Activated naive CD4-positive, alpha-beta T cell treated with anti-CD3 and anti-CD28 coated beads for 36 hours (primary cell): ENCODE measurements at regions of chr14 and their contacts with region 1.

Region 1: DNA sequence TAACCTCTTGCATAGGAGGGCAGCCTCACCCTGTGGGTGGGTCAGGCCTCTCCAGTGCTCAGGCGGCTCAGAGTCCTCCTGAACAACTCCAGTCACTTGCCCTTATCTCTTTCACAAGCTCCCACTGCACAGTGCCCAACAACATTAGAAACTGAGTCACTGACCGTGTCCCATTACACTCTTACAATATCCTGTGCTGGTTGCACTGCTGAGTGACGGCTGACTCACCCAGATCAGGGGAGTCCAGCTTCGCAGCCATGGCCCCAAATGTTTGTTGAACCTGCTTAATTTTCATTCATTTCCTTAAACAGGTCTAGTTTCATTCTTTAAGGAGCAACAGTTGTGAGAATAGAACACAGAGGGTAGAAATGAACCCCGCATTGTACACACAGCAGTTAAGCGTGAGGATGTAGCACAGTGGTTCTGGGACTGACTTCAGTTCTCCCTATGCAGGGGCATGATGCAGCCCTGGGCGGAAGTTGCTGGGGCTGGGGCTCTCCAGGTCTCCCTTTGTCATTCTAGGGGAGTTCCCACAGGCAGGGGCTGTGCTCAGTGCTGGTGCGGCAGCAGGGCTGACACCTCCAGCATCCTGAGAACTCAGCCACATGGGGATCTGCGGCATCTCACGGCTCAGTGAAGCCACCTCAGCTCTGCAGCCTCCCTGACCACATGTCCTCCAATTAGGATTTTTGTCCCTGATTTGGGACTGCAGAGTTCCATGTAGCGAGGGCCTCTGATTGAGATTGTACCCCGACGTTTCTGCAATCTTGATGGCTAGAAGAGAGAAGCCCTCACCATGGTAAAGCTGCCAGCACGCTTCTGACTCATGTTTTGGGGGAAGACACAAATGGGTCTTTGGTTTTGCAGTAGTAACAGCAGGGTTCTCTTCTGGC is 16.1 kb downstream of the GPR68 start:
- DNase-seq: peak; percentile 97
- H3K4me3 Mint-ChIP-seq: peak overlapping the region; percentile 58
- H3K27ac Mint-ChIP-seq: peak overlapping the region; percentile 99
- H3K4me1 Mint-ChIP-seq: peaks cover 89% of the 10 kb centered on the region
- H3K27me3 Mint-ChIP-seq: no peaks in the 10 kb centered on the region

Region 2: DNA sequence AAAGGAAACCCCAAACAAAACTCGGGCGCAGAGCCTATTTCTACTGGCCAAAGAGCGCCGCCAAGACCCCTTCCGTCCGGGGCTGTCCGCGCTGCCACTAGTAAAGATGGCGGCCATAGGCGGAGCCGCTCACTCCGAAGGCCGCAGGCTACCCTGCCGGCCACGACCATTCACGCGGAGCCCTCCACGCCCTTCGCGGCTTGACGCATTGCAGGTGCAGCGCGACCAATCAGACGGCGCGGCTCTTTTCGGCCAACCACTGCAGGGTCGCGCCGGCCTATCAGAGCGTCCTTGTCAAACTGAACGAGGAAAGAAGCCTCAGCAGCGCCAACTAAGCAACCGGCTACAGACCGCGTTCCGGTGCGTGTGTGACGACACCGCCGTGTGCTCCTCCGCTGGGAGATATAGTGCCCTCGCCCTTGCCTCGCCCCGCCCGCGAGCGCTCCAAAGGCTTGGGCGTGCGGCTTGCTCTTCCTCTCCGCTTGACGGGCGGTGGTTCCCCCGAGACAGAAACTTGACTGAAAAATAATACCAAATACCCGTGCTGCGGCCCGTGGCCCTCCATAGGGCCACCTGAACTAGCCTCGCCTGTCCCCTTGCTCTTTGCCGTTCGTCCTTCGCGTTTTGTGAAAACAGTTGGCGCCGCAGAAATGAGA is 845.2 kb before region 1 on chr14:
- CTCF ChIA-PET with region 1: no interaction called
- intact Hi-C with region 1: loop called (anchors 1 kb)
- DNase-seq: peak; percentile 99
- H3K4me3 Mint-ChIP-seq: no peak overlapping the region
- H3K27ac Mint-ChIP-seq: no peak overlapping the region
- H3K4me1 Mint-ChIP-seq: peaks cover 23% of the 10 kb centered on the region
- H3K27me3 Mint-ChIP-seq: no peaks in the 10 kb centered on the region

Region 3: DNA sequence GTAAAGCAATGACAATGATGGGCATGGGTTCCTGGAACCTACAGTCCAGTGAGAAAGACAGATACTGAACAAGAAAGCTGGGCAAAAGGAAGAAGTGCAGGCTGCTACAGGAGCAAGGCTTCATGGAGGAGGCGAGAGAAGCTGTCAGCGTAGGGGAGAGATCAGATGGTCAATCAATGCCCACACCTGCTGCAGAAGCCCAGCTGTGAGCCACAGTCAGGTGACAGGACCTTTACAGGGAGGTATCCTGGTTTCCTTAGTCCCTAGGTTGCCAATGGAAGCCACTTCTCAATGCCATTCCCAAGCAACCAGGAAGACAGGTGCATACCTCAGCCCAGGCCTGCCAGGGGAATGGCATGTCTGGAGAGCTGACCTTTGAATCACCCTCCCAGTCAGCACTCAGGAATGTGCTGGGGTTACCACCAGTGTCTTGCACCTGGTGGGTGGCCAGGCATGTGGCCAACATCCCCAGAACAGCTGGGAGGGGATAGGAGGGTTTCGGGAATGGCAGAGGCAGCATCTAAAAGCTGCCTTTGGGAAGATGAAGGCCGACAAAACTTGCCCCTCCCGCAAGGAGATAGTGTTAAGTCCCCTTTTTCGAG is 582.4 kb before region 1 on chr14:
- CTCF ChIA-PET with region 1: no interaction called
- intact Hi-C with region 1: no loop called
- DNase-seq: no peak
- H3K4me3 Mint-ChIP-seq: no peak overlapping the region
- H3K27ac Mint-ChIP-seq: no peak overlapping the region
- H3K4me1 Mint-ChIP-seq: no peaks in the 10 kb centered on the region
- H3K27me3 Mint-ChIP-seq: no peaks in the 10 kb centered on the region

Region 4: DNA sequence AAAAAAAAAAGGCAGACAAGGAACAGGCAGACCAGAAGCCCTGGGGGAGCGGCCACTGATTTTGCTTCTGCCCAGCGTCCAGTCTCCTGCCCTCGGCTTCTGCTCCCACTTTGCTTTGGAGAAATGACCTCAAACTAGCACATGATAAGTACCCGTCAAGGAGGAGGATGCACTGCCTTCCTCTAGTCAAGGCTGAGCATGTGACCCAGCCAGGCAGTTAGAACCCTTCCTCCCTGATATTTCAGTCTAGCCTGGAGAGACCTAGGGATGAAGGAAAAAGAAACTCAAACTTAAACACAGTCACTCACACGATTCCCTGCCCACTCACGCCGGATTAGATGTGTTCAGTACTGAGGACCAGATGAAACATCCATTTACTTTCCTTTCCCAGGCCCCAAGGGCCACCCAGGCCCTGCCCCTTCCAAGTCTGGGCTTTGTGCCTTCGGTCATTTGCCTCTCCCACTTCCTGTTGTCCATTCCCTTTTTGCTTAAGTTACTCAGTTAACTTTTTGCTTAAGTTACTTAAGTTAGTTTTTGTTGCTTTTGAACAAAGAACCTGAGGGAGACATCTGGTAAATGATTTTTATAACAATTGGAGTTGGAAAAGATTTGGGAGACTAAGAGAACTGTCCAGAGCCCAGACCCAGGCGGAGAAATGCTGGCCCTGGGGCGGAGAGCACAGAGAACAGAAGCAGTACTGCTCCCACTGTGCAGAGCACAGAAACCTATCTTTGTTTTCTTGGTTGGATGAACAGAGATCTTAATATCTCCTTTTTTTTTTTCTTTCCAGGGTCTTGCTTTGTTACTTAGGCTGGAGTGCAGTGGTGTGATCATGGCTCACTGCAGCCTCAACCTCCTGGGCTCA is 389.1 kb before region 1 on chr14:
- CTCF ChIA-PET with region 1: no interaction called
- intact Hi-C with region 1: no loop called
- DNase-seq: no peak
- H3K4me3 Mint-ChIP-seq: no peak overlapping the region
- H3K27ac Mint-ChIP-seq: no peak overlapping the region
- H3K4me1 Mint-ChIP-seq: peaks cover 14% of the 10 kb centered on the region
- H3K27me3 Mint-ChIP-seq: no peaks in the 10 kb centered on the region

Region 5: GRCh38 chr14:91089958-91090535 is 138.3 kb before region 1 on chr14:
- CTCF ChIA-PET with region 1: no interaction called
- intact Hi-C with region 1: no loop called
- DNase-seq: no peak
- H3K4me3 Mint-ChIP-seq: no peak overlapping the region
- H3K27ac Mint-ChIP-seq: no peak overlapping the region
- H3K4me1 Mint-ChIP-seq: peaks cover 11% of the 10 kb centered on the region
- H3K27me3 Mint-ChIP-seq: no peaks in the 10 kb centered on the region

Region 6: GRCh38 chr14:91114079-91115065 is 114.0 kb before region 1 on chr14:
- CTCF ChIA-PET with region 1: no interaction called
- intact Hi-C with region 1: loop called (anchors 2 kb)
- DNase-seq: peak; percentile 82
- H3K4me3 Mint-ChIP-seq: peak overlapping the region; percentile 94
- H3K27ac Mint-ChIP-seq: peak overlapping the region; percentile 95
- H3K4me1 Mint-ChIP-seq: peaks cover 60% of the 10 kb centered on the region
- H3K27me3 Mint-ChIP-seq: no peaks in the 10 kb centered on the region

Region 7: GRCh38 chr14:91244501-91244901 is 16.1 kb after region 1 on chr14 and contains the start of gene GPR68:
- CTCF ChIA-PET with region 1: interaction called, 81 read pairs
- intact Hi-C with region 1: loop called (anchors 1 kb)
- DNase-seq: peak; percentile 39
- H3K4me3 Mint-ChIP-seq: peak within 1 kb of the TSS; percentile 55
- H3K27ac Mint-ChIP-seq: peak within 1 kb of the TSS; percentile 97
- H3K4me1 Mint-ChIP-seq: peaks cover 81% of the 10 kb centered on the region
- H3K27me3 Mint-ChIP-seq: no peaks in the 10 kb centered on the region
- total RNA-seq, gene GPR68: 1.2 to 1.3 TPM

Region 8: DNA sequence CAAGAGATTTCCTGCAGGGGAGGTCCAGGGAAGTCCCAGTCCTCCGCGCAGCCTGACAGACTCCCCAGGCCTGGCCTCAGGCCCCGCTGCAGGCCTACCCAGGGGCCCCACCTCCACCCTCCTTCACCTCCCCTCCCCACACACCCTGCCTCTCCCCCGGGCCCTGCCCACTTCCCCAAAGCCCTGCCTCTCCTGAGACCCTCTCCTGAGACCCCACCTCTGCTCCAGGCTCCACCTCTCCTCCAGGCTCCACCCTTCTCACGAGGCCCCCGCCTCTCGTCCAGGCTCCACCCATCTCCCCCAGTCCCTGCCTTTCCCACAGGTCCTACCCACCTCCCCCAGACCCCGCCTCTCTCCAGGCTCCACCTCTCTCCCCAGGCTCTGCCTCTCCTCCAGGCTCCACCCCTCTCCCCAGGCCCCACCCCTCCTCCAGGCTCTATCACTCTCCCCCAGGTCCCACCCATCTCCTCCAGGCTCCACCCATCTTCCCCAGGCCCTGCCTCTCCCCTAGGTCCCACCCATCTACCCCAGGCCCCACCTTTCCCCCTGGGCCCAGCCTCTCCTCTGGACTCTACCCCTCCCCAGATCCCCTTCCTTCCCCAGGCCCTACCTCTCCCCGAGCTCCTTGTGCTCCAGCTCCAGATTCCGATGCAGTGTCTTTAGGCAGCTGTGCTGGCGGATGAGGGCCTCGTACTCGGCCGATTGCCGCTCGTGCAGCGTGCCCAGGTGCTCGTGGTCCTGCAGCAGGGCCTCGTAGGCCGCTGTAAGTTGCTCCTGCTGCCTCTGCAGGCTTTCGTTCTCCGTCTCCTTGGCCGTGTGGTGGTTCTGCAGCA is 74.9 kb after region 1 on chr14:
- CTCF ChIA-PET with region 1: no interaction called
- intact Hi-C with region 1: loop called (anchors 1 kb)
- DNase-seq: peak; percentile 89
- H3K4me3 Mint-ChIP-seq: no peak overlapping the region
- H3K27ac Mint-ChIP-seq: peak overlapping the region; percentile 93
- H3K4me1 Mint-ChIP-seq: peaks cover 58% of the 10 kb centered on the region
- H3K27me3 Mint-ChIP-seq: no peaks in the 10 kb centered on the region

Region 9: GRCh38 chr14:91373591-91374254 is 145.4 kb after region 1 on chr14:
- CTCF ChIA-PET with region 1: no interaction called
- intact Hi-C with region 1: loop called (anchors 5 kb)
- DNase-seq: peak; percentile 83
- H3K4me3 Mint-ChIP-seq: peak overlapping the region; percentile 58
- H3K27ac Mint-ChIP-seq: peak overlapping the region; percentile 93
- H3K4me1 Mint-ChIP-seq: peaks cover 99% of the 10 kb centered on the region
- H3K27me3 Mint-ChIP-seq: no peaks in the 10 kb centered on the region